PC-9 (cell line): ENCODE measurements at regions of chr2 and their contacts with region 1.

Region 1: GRCh38 chr2:100610381-100610831 is 47.6 kb downstream of the PDCL3 start:
- DNase-seq: peak; percentile 35 to 80
- H3K4me3 ChIP-seq: no peak overlapping the region
- H3K27ac ChIP-seq: no peak overlapping the region
- H3K4me1 ChIP-seq: no peaks in the 10 kb centered on the region
- H3K27me3 ChIP-seq: no peaks in the 10 kb centered on the region
- CTCF ChIP-seq: peak; percentile 79

Region 2: DNA sequence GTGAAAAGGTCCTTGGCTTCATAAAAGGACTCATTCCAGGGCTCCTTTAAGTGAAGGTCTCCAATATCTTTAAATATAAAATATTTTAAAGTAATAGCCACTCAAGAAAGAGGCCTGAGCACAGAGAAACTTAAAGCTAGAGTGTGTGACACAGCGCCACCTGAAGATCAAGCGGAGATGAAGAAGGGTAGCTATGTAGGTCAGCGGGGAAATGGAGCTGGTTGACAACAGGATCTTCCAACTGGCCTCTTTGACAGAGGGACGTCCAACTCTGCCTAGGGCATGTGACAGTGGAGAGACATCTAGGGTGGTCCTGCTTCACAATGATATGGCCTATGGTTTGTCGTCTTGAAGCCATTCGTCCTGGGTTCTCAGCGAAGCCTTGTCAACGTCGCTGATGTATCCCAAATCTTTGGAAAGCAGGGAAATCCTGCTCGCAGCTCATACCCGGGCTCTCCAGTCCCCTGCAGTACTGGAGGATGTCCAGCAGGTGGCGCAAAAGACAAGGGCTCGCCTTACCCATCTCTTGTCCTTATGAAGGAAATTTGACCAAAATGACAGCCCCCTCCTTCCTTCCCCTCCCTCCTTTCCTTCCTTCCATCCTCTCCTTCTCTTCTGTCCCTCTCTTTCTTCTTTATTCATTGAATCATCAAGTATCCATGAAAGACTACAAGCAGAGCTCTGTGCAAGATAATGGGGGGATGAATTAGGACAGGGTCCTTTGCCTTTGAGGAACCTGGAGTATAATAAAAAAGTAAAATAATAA is 347.7 kb before region 1 on chr2:
- CTCF ChIA-PET with region 1: interaction called, 14 read pairs
- POLR2A ChIA-PET with region 1: no interaction called
- intact Hi-C with region 1: no loop called
- DNase-seq: peak in 1 of 2 experiments; percentile 56
- H3K4me3 ChIP-seq: no peak overlapping the region
- H3K27ac ChIP-seq: no peak overlapping the region
- H3K4me1 ChIP-seq: no peaks in the 10 kb centered on the region
- H3K27me3 ChIP-seq: peaks cover 90% of the 10 kb centered on the region
- CTCF ChIP-seq: peak; percentile 99

Region 3: DNA sequence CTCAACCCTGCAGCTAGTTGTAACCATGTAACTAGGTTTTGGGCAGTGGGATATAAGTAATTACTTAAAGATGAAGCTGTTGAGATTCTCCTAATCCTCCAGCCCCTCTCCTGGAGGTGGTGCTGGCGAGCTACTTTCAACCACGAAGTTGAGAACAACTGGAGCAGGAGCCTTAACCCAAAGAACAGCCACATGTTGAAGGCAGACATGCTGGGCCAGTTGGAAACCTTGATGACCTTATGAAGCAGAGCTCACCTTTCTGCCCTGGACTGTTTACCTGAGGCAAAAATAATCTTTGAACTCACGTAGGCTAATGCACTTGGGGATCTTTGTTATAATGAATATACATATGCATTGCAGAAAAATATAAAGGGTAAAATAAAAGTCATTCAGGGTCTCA is 119.9 kb after region 1 on chr2:
- CTCF ChIA-PET with region 1: interaction called, 7 read pairs
- POLR2A ChIA-PET with region 1: no interaction called
- intact Hi-C with region 1: loop called (anchors 5 kb)
- DNase-seq: peak; percentile 61 to 72
- H3K4me3 ChIP-seq: no peak overlapping the region
- H3K27ac ChIP-seq: no peak overlapping the region
- H3K4me1 ChIP-seq: peaks cover 29% of the 10 kb centered on the region
- H3K27me3 ChIP-seq: no peaks in the 10 kb centered on the region
- CTCF ChIP-seq: peak; percentile 86

Region 4: DNA sequence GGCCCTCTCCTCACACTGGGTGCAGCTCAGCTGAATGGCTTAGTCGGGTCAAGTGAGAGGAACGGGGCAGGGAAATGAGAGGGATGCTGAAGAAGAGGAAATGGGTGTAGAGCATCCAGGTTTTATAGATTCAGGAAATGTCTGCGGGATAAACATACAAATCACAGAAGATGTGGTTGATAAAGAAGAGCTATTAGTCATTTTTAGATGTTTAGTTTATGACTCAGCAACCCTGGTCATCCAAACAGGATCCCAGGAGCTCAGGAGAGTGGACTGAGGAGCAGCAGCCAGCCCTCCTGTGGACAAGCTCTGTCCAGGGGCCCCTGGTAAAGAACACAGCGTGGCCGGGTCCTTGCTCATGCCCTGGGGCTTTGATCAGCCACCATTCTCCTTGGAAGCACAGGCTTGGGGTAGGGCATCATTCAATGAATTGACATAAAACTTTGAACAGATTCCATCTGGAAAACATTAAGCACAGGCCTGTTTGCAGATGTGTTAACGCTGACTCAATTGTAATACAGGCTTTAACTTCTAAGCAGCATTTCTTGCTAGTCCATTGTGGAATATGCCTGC is 292.5 kb after region 1 on chr2:
- CTCF ChIA-PET with region 1: no interaction called
- POLR2A ChIA-PET with region 1: no interaction called
- intact Hi-C with region 1: loop called (anchors 10 kb)
- DNase-seq: peak; percentile 85 to 97
- H3K4me3 ChIP-seq: no peak overlapping the region; the same call in 1 of the 2 replicates
- H3K27ac ChIP-seq: peak overlapping the region; percentile 93
- H3K4me1 ChIP-seq: peaks cover 60% of the 10 kb centered on the region
- H3K27me3 ChIP-seq: no peaks in the 10 kb centered on the region
- CTCF ChIP-seq: no peak

Region 5: DNA sequence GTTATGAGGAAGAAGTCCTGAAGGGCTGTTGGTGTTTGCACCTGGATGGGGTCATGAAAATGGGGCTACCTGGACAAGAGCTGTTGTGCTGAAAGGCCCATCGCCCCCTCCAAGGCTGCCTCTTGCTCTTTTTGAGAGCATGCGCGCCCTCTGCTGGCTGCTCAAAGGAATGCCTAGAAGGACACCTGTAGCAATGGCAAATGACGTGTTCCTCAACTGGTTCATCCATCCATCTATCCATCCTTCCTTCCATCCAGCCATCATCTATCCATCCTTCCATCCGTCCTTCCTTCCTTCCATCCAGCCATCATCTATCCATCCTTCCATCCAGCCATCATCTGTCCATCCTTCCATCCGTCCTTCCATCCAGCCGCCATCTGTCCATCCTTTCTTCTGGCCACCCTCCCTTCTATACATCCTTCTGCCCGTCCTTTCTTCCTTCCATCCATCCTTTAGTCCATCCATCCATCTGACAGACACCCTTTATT is 374.5 kb after region 1 on chr2:
- CTCF ChIA-PET with region 1: interaction called, 4 read pairs
- POLR2A ChIA-PET with region 1: no interaction called
- intact Hi-C with region 1: loop called (anchors 1 kb)
- DNase-seq: peak; percentile 50 to 63
- H3K4me3 ChIP-seq: no peak overlapping the region
- H3K27ac ChIP-seq: no peak overlapping the region
- H3K4me1 ChIP-seq: no peaks in the 10 kb centered on the region
- H3K27me3 ChIP-seq: no peaks in the 10 kb centered on the region
- CTCF ChIP-seq: peak; percentile 94

Region 6: DNA sequence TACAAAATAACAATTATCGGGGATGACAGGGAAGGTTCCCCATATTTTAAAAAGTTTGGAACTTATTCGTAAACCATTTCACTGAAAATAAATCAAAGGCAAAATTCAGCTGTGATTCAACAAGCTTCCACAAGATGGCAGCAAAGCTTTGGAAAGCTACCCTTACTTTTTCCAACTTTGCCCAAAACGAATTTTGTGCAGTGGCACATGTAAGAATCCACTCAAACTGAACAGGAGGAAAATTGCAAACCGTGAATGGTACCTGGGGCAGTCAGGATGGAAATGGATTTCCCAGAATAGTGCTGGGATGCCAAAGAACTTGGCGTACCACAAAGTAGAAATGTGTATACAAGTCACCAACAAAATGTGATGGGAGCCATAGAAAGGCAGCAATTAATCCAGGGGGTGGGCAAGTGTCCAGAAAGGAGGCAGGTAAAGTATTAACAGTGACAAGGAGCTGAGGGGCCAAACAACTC is 402.3 kb after region 1 on chr2:
- CTCF ChIA-PET with region 1: interaction called, 8 read pairs
- POLR2A ChIA-PET with region 1: no interaction called
- intact Hi-C with region 1: loop called (anchors 5 kb)
- DNase-seq: peak; percentile 19 to 39
- H3K4me3 ChIP-seq: no peak overlapping the region
- H3K27ac ChIP-seq: no peak overlapping the region; the same call in 1 of the 2 replicates
- H3K4me1 ChIP-seq: no peaks in the 10 kb centered on the region
- H3K27me3 ChIP-seq: no peaks in the 10 kb centered on the region
- CTCF ChIP-seq: peak; percentile 91

Region 7: GRCh38 chr2:101205521-101205998 is 595.2 kb after region 1 on chr2:
- CTCF ChIA-PET with region 1: interaction called, 3 read pairs
- POLR2A ChIA-PET with region 1: no interaction called
- intact Hi-C with region 1: loop called (anchors 10 kb)
- DNase-seq: peak; percentile 49 to 75
- H3K4me3 ChIP-seq: peak overlapping the region; percentile 48; the same call in 1 of the 2 replicates
- H3K27ac ChIP-seq: peak overlapping the region; percentile 28; the same call in 1 of the 2 replicates
- H3K4me1 ChIP-seq: peaks cover 5% of the 10 kb centered on the region; the same call in 1 of the 2 replicates
- H3K27me3 ChIP-seq: no peaks in the 10 kb centered on the region
- CTCF ChIP-seq: peak; percentile 59